ENCODE measurements at regions of chr5 and their contacts with region 1.

Region 1: DNA sequence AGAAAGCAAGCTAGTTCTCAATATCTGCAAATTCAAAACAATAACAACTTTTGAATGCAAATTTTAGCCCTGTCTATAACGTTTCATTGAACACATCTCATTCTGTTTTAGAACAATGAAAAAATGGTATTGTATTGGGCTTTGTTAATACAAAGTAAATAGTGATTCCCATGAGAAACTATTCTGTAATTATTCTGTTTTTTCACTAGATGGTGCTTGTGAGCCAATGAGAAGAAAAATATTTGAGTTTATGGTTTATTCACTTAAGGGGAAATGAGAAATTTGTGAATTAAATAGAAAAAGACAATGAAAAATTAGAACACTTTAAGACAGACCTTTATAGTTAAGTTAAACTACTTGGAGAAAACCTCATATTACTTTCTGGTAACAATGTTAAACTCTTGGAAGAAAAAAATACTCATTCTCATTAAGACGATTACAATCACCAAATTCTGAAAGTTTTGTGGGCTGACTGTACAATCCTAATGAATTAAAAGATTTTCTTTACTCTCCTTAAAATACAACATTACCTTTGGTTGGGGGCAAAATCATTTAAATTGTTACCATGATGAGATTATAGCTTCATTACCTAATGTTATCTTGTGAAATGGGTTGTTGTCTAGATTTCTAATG is 127.0 kb downstream of the NNT start:
- DNase-seq: no peak
- H3K4me3 ChIP-seq: no peak overlapping the region
- CTCF ChIP-seq: peak; percentile 22

Region 2: DNA sequence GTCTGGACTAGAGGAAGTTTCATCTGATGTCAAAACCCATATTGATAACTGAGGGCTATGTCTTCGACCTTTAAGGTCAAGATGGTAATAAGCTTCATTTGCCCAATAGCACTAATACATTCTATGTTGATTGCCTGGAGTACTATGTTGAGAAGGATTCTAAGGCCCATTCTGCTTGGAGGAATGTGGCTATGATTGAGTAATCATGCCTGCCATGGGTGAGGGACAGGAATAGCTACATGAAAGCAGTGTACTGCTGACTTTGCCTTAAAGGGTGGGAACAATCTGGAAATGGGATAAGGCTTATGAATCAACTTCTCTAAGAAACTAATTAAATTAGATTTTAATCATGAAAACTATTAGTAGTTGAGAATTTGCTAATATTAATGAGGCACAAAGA is 113.4 kb before region 1 on chr5:
- CTCF ChIA-PET with region 1: no interaction called
- POLR2A ChIA-PET with region 1: no interaction called
- DNase-seq: no peak
- H3K4me3 ChIP-seq: no peak overlapping the region
- CTCF ChIP-seq: no peak

Region 3: DNA sequence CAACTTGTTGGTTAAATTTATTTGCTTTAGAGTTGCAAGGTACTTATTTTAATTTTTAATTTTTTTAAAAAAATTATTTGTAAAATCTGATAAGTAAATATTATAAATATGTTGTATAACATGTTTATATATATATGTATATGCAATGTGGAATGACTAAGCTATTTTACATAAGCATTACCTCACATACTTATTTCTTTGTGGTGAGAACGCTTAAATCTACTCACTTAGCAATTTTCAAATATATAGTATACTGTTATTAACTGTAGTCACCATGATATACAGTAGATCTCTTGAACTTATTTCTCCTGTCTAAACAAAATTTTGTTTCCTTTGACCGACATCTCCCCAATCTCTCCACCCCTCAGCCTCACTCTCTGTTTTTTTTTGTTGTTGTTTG is 20.8 kb after region 1 on chr5:
- CTCF ChIA-PET with region 1: no interaction called
- POLR2A ChIA-PET with region 1: no interaction called
- DNase-seq: no peak
- H3K4me3 ChIP-seq: no peak overlapping the region
- CTCF ChIP-seq: no peak

Region 4: DNA sequence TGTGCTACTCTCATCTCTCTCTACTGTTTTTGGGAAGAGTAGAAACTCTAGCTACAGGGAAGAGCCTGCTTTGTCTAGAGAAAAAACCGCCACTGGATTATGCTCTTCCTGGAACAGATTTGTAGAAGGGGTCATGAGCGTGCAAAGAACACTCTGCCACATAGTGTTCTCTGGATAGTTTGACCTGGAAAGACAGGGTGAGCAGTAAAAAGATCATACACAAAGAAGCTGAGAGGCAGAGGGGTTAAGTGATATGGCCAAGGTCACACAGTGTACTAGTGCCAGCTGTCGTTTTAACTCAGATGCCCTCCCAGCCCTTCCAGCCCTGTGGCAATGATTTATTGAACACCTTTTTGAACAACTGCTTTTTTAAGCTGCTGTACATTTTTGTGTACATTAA is 55.2 kb after region 1 on chr5:
- CTCF ChIA-PET with region 1: no interaction called
- POLR2A ChIA-PET with region 1: no interaction called
- DNase-seq: no peak
- H3K4me3 ChIP-seq: no peak overlapping the region
- CTCF ChIP-seq: no peak

Region 5: DNA sequence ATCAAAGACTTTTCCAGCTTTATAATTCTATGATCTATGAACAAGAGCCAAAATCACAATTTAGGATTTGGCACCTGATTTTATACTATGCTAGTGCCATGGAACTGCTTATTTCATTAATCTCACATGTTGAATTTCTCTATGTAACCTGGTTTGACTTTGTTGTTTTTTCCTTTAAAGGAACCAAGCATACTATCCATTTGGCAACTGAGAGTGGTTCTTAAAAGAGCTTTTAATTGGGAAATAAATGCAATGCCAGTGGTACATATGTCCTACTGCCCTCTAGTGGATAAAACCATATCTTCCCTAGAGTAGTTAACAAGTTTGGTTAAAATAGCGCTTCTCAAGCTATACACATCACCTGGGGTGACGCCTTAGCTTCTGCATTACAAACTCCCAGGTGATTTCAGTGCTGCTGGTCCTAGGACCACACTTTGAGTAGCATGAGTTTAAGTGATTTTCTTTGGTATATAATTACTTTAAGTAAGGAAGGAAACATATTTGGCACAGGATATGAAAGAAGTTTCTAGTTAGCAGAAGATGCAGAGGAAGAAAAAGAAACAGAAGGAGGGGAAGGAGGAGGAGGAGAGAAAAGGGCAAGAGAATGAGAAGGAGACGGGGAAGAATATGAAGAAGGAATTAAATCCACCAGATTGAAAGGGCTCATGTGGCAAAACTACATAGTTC is 602.5 kb after region 1 on chr5:
- CTCF ChIA-PET with region 1: interaction called, 75 read pairs
- POLR2A ChIA-PET with region 1: no interaction called
- DNase-seq: peak; percentile 2
- H3K4me3 ChIP-seq: no peak overlapping the region
- CTCF ChIP-seq: peak; percentile 27

Measured in AG04449 (cell line).